ENCODE measurements at regions of chr17 and their contacts with region 1.

Region 1: GRCh38 chr17:17919169-17920107 is 52.8 kb downstream of the TOM1L2 start:
- DNase-seq: no peak
- ATAC-seq: peak; percentile 68
- H3K4me3 ChIP-seq: no peak overlapping the region
- H3K27ac ChIP-seq: peak overlapping the region; percentile 98
- H3K4me1 ChIP-seq: peaks cover 54% of the 10 kb centered on the region
- H3K27me3 ChIP-seq: no peaks in the 10 kb centered on the region
- CTCF ChIP-seq: peak; percentile 88

Region 2: GRCh38 chr17:17681187-17681848 is 238.1 kb before region 1 on chr17 and contains the start of gene RAI1:
- CTCF ChIA-PET with region 1: interaction called, 15 read pairs
- POLR2A ChIA-PET with region 1: no interaction called
- in situ Hi-C with region 1: no loop called
- intact Hi-C with region 1: no loop called
- DNase-seq: no peak
- ATAC-seq: peak; percentile 65
- H3K4me3 ChIP-seq: peak within 1 kb of the TSS; percentile 63 to 64
- H3K27ac ChIP-seq: peak within 1 kb of the TSS; percentile 97
- H3K4me1 ChIP-seq: peaks cover 35% of the 10 kb centered on the region
- H3K27me3 ChIP-seq: no peaks in the 10 kb centered on the region
- CTCF ChIP-seq: peak; percentile 96
- total RNA-seq, gene RAI1: 51.0 TPM

Region 3: DNA sequence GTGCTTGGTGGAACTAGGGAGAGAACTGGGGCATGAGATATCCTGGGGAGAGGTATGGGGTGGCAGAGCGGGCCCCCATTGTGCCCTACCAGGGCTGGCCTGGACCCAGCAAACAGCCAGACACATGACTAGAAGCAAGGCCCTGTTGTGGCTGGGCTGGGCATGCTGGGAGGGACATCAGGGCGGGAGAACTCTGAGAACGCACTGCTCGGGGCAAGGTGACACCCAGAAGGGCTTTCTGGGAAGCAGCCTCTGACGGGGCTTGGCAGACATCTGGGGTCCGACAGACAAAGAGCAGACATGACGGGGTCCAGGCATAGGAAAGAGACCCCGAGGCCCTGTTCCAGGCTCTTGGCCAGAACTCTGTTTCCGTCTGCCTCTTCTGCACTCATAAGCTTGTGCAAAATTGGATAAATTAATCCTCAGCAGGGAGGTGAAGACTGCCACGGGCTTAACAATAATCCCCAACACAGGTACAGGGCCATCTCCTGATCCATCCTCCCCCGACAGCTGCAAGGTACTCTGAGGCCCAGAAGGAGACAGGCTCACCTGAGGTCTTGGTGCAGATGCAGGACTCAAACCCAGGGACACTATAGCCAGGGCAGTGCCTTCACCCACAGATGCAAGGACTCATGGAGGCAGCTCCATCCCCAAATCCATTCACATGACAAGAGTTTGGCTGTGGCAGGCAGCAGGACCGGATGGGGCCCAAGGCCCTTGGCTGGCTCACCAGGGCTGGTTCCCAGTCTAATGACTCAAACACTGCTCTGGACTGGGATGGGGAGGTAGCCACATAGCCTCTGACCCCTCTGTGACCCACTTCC is 88.0 kb before region 1 on chr17:
- CTCF ChIA-PET with region 1: interaction called, 3 read pairs
- POLR2A ChIA-PET with region 1: interaction called, 12 read pairs
- in situ Hi-C with region 1: no loop called
- intact Hi-C with region 1: no loop called
- DNase-seq: no peak
- ATAC-seq: no peak
- H3K4me3 ChIP-seq: no peak overlapping the region
- H3K27ac ChIP-seq: peak overlapping the region; percentile 39
- H3K4me1 ChIP-seq: peaks cover 46% of the 10 kb centered on the region
- H3K27me3 ChIP-seq: no peaks in the 10 kb centered on the region
- CTCF ChIP-seq: no peak

Region 4: GRCh38 chr17:17959520-17960361 is 40.3 kb after region 1 on chr17:
- CTCF ChIA-PET with region 1: no interaction called
- POLR2A ChIA-PET with region 1: no interaction called
- in situ Hi-C with region 1: no loop called
- intact Hi-C with region 1: loop called (anchors 5 kb)
- DNase-seq: peak; percentile 69
- ATAC-seq: 0 out of 2 replicates have a peak, but pooled peaks have one; percentile 18
- H3K4me3 ChIP-seq: peak overlapping the region; percentile 29 to 30
- H3K27ac ChIP-seq: peak overlapping the region; percentile 97
- H3K4me1 ChIP-seq: peaks cover 49% of the 10 kb centered on the region
- H3K27me3 ChIP-seq: no peaks in the 10 kb centered on the region
- CTCF ChIP-seq: no peak

Measured in Panc1 (cell line).